Activated CD4-positive, alpha-beta T cell treated with anti-CD3 and anti-CD28 coated beads, Interleukin-2, amount 10 ng/mL, durations not matched to agents 24 days and 14 days (primary cell): ENCODE measurements at regions of chr2 and their contacts with region 1.

Region 1: DNA sequence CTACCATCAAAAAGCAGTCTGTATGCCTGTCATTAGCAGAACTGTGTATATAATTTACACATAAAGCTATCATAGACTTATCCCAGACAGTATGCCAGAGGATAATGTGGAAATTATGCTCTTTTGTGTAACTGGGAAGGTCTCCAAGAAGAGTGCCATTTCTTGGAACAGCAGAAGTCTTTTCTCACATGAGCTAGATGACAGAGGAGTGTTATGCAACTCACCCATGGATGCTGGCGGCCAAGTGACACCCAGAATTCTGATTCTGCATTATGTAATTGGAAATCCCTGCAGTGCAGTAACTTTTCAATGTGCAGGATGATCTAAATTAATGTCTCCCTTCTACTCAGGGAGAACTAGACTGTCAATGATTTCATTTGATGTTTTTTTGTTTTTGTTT is 160.0 kb downstream of the UBE2E3 start:
- DNase-seq: no peak
- H3K4me3 Mint-ChIP-seq: peak overlapping the region; percentile 79
- H3K27ac Mint-ChIP-seq: peak overlapping the region; percentile 80
- H3K4me1 Mint-ChIP-seq: peaks cover 56% of the 10 kb centered on the region
- H3K27me3 Mint-ChIP-seq: no peaks in the 10 kb centered on the region

Region 2: DNA sequence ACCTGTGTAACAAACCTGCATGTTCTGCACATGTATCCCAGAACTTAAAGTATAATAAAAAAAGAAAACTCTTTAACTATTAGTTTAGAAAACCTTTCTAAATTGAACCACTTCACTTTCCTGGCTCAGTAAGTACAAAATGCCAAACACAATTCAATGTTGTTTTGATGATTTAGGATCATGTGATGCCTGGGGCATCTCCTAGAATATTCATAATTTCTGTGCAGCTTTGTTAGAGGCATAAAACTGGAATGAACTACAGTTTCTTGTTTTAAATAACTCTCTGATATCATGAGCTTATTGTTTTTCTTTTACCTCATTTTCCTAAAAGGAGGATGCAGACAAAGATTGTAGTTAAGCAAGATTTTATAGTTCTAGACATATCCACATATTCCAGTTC is 1736.8 kb before region 1 on chr2:
- intact Hi-C with region 1: no loop called
- DNase-seq: no peak
- H3K4me3 Mint-ChIP-seq: no peak overlapping the region
- H3K27ac Mint-ChIP-seq: no peak overlapping the region
- H3K4me1 Mint-ChIP-seq: no peaks in the 10 kb centered on the region
- H3K27me3 Mint-ChIP-seq: peaks cover 9% of the 10 kb centered on the region

Region 3: GRCh38 chr2:181165199-181165868 is 24.9 kb after region 1 on chr2:
- intact Hi-C with region 1: loop called (anchors 2 kb)
- DNase-seq: peak; percentile 81
- H3K4me3 Mint-ChIP-seq: peak overlapping the region; percentile 58
- H3K27ac Mint-ChIP-seq: peak overlapping the region; percentile 93
- H3K4me1 Mint-ChIP-seq: peaks cover 36% of the 10 kb centered on the region
- H3K27me3 Mint-ChIP-seq: no peaks in the 10 kb centered on the region

Region 4: GRCh38 chr2:181223234-181223633 is 82.8 kb after region 1 on chr2:
- intact Hi-C with region 1: no loop called
- DNase-seq: peak; percentile 59
- H3K4me3 Mint-ChIP-seq: peak overlapping the region; percentile 71
- H3K27ac Mint-ChIP-seq: peak overlapping the region; percentile 96
- H3K4me1 Mint-ChIP-seq: peaks cover 29% of the 10 kb centered on the region
- H3K27me3 Mint-ChIP-seq: no peaks in the 10 kb centered on the region